ENCODE measurements at regions of chr1 and their contacts with region 1.

Region 1: GRCh38 chr1:166122873-166123466 is 43.8 kb downstream of the FAM78B start:
- DNase-seq: peak; percentile 27 to 53
- H3K4me3 ChIP-seq: no peak overlapping the region
- H3K27ac ChIP-seq: no peak overlapping the region
- H3K4me1 ChIP-seq: peaks cover 0 to 2% (median under 1%) of the 10 kb centered on the region in 4 experiments; a peak in 4 of 7 replicates
- H3K27me3 ChIP-seq: no peaks in the 10 kb centered on the region
- CTCF ChIP-seq: no peak
- EP300 ChIP-seq: no peak
- POLR2A ChIP-seq: no peak
- RAD21 ChIP-seq: no peak

Region 2: DNA sequence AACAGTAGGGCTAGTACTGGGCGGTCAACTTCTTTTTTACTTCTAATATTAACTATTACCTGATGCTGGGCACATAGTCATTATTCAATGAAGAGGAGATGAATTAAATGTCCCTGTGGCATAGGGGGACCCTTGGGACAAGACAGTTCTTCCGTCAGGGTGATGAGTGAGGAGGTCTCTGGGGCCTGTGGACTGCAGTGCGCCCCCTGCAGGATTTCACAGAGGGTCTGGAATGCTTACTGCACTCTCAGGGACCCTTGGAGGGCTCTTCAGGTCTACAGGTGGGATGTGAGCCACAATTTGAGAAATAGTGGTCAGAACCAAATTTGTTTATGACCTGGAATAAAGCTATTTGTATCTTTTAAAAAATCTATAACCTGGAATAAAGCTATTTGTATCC is 105.6 kb before region 1 on chr1:
- CTCF ChIA-PET with region 1: interaction called, 11 read pairs
- POLR2A ChIA-PET with region 1: no interaction called
- DNase-seq: peak in 1 of 2 experiments; percentile 66
- H3K4me3 ChIP-seq: no peak overlapping the region
- H3K27ac ChIP-seq: no peak overlapping the region
- H3K4me1 ChIP-seq: no peaks in the 10 kb centered on the region
- H3K27me3 ChIP-seq: no peaks in the 10 kb centered on the region; a peak in 2 of 7 replicates
- CTCF ChIP-seq: peak; percentile 72 to 87 (median 83)
- EP300 ChIP-seq: no peak
- POLR2A ChIP-seq: no peak
- RAD21 ChIP-seq: peak; percentile 61 to 68

Region 3: DNA sequence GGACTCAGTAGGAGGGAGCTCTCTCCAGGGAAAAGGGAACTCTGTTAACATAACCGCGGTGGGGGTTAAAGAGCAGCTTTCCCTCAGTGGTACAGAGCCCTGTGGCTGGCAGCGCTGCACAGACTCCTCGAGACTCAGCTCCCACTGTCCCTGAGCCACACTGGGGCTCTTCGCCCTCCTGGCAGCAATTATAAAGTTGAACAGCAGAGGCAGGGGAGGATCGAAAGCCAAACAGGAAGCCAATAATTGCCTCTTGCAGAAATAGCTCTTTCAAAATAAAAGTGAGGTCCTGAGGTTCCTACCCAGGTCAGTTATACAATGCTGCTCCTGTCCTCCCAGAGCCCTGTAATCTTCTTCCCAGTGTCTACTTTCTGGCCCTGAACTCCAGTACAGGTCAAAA is 33.2 kb before region 1 on chr1:
- CTCF ChIA-PET with region 1: interaction called, 11 read pairs
- POLR2A ChIA-PET with region 1: no interaction called
- DNase-seq: no peak
- H3K4me3 ChIP-seq: no peak overlapping the region
- H3K27ac ChIP-seq: no peak overlapping the region
- H3K4me1 ChIP-seq: no peaks in the 10 kb centered on the region
- H3K27me3 ChIP-seq: no peaks in the 10 kb centered on the region
- CTCF ChIP-seq: peak in 1 of 3 experiments; percentile 3; a peak in 1 of 4 replicates
- EP300 ChIP-seq: no peak
- POLR2A ChIP-seq: no peak
- RAD21 ChIP-seq: peak; percentile 8 to 31; a peak in 1 of 4 replicates

Region 4: GRCh38 chr1:166133276-166133841 is 10.4 kb after region 1 on chr1:
- CTCF ChIA-PET with region 1: interaction called, 18 read pairs
- POLR2A ChIA-PET with region 1: no interaction called
- DNase-seq: no peak
- H3K4me3 ChIP-seq: no peak overlapping the region
- H3K27ac ChIP-seq: no peak overlapping the region
- H3K4me1 ChIP-seq: no peaks in the 10 kb centered on the region
- H3K27me3 ChIP-seq: no peaks in the 10 kb centered on the region
- CTCF ChIP-seq: peak in 2 of 3 experiments; percentile 28 to 61; a peak in 2 of 4 replicates
- EP300 ChIP-seq: no peak
- POLR2A ChIP-seq: no peak
- RAD21 ChIP-seq: peak; percentile 69 to 73

Measured in H1 (cell line).